ENCODE measurements at regions of chr19 and their contacts with region 1.

Region 1: DNA sequence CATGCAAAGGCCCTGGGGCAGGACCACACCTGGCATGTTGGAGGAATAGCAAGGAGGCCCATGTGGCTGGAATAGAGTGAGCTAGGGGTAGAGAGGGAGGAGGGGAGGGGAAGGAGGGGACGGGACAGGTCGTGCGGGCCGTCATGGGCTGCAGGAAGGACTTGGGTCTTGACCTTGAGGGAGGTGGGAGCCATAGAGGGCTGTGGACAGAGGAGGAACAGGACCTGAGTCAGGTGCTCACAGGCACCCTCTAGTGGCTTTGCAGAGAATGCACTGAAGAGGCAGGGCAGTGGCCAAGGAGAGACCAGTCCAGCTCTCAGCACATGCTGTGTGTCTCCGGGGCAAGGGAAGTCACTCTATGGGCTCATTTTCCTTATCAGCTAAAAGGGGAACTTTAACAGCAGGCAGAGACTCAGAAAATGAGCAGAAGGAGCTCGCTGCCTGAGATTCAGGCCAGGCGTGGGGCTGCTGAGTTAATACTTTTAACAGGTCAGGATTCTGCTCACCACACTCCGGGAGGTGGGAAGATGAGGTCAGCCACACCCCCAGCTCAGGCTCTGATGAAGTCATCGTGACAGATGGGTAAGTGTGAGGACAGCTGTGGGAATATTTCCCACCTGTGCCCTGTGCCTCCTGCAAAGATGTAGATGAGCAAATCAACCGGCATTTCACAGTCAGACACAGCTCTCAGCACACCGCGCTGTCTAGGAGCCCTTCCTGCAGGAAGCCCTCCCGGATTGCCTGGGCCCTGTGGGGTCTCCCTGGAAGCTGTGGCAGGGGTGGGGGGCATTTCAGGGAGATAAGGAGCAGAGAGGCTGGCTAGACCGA is 6.0 kb upstream of the TNFAIP8L1 start:
- DNase-seq: peak; percentile 57
- H3K4me3 ChIP-seq: no peak overlapping the region
- H3K27ac ChIP-seq: no peak overlapping the region
- H3K4me1 ChIP-seq: peaks cover 17% of the 10 kb centered on the region
- CTCF ChIP-seq: peak; percentile 82

Region 2: DNA sequence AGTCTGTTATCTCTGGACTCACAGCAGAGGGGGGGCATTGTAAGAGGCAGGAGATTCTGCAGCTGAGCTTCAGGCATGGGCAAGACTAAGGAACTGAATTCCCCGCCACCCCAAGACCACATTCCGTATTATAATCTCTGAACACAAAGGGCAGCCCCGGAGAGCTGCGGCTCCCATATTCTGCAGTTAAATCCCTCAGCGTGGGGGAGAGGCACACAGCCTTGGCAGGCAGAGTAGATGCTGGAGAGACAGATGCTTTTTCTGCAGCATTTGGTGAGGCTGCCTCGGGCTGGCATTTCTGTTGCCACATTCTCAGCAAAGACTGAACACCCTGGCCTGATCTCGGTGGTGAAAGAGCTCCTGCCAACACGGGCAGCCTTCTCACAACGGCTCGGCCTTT is 218.0 kb before region 1 on chr19:
- CTCF ChIA-PET with region 1: no interaction called
- POLR2A ChIA-PET with region 1: no interaction called
- intact Hi-C with region 1: no loop called
- DNase-seq: no peak
- H3K4me3 ChIP-seq: no peak overlapping the region
- H3K27ac ChIP-seq: no peak overlapping the region
- H3K4me1 ChIP-seq: peaks cover 3% of the 10 kb centered on the region
- CTCF ChIP-seq: no peak

Region 3: GRCh38 chr19:4471403-4472173 is 161.8 kb before region 1 on chr19:
- CTCF ChIA-PET with region 1: interaction called, 12 read pairs
- POLR2A ChIA-PET with region 1: no interaction called
- intact Hi-C with region 1: no loop called
- DNase-seq: peak; percentile 100
- H3K4me3 ChIP-seq: peak overlapping the region; percentile 98
- H3K27ac ChIP-seq: peak overlapping the region; percentile 88
- H3K4me1 ChIP-seq: peaks cover 30% of the 10 kb centered on the region
- CTCF ChIP-seq: no peak

Region 4: GRCh38 chr19:4582980-4583842 is 50.1 kb before region 1 on chr19:
- CTCF ChIA-PET with region 1: no interaction called
- POLR2A ChIA-PET with region 1: no interaction called
- intact Hi-C with region 1: no loop called
- DNase-seq: no peak
- H3K4me3 ChIP-seq: no peak overlapping the region
- H3K27ac ChIP-seq: no peak overlapping the region
- H3K4me1 ChIP-seq: peaks cover 7% of the 10 kb centered on the region
- CTCF ChIP-seq: no peak

Region 5: GRCh38 chr19:4622695-4623421 is 10.5 kb before region 1 on chr19:
- CTCF ChIA-PET with region 1: no interaction called
- POLR2A ChIA-PET with region 1: no interaction called
- intact Hi-C with region 1: no loop called
- DNase-seq: no peak
- H3K4me3 ChIP-seq: no peak overlapping the region
- H3K27ac ChIP-seq: no peak overlapping the region
- H3K4me1 ChIP-seq: no peaks in the 10 kb centered on the region
- CTCF ChIP-seq: no peak